IMR-90 (cell line): ENCODE measurements at regions of chr5 and their contacts with region 1.

Region 1: DNA sequence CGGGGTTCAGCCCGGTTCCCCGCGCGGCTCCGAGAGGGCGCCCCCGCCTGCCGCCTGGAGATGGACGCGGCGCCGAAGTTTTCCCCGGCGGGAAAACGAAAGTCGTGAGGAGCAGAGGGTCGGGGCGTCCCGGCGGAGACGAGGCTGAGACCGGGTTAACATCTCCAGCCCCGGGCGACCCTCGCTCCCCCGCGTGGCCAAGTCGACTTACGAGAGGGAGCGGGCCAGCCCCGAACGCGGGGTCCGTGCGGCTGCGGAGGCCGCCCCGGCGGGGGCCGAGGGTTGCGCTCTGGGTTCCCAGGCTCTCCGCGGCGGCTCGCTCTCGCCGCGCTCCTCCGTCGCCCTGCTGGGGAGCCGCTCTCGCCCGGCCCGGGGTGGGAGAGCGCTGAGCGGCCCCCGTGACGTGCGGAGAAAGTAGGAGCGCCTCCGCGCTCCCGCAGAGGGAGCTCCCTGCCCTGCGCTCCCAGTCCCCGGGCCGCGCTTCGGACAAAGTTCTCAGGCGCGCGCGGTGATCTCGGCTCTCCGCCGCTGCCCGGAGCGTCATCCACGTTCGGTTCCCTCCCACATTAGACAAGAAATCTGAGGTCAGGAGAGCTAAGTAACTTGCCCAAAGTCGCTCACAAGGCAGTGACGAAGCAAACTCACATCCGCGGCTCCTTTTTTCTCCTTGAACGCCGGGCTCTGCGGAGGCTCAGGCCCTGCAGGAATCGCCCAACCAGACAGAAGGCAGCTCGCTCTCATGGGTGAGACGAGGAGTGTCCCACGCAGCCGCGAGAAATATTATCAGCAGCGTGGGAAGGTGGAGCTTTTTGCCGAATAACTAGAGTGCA is 1.2 kb upstream of the GCNT4 start:
- DNase-seq: peak; percentile 73
- ATAC-seq: peak; percentile 52
- H3K4me3 ChIP-seq: peak overlapping the region; percentile 82
- H3K27ac ChIP-seq: peak overlapping the region; percentile 68
- H3K4me1 ChIP-seq: peaks cover 19% of the 10 kb centered on the region
- H3K27me3 ChIP-seq: no peaks in the 10 kb centered on the region
- CTCF ChIP-seq: peak; percentile 19; the same call in 1 of the 2 replicates
- POLR2A ChIP-seq: peak; percentile 45; the same call in 1 of the 2 replicates
- RAD21 ChIP-seq: no peak

Region 2: DNA sequence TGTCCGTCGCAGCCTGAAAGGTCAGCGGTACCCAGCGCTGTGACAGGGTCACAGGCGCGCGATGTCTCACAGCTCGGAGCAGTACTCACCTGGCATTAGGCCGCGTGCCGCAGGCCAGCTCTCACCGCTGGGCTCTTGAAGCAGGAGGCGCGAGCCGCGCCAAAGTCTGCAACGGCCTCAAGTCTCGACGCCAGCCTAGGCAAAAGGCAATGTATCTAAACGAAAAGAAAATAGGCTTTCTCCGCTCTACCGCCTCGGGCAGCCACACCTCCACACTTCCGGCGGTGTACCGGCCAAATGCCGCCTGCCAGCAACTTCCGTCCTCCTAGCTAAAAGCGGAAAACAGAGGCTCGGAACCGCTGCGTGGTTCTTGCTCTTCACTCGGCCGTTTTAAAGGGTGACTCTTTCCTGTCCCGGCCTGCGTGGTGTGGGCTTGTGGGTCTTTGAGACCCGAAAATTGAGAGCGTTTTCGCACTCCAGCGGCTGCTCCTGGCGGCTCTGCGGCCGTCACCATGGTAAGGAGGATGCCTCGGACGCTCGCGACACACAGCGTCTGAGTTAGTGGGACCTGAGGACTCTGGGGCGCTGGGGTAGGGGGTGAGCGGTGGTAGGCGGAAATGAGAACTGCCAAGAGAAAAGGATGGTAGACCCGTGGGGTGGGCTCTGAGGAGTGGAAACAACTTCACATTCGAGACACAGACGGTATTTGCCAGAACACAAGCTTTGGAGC is 286.5 kb before region 1 on chr5 and contains the starts of genes GFM2 and NSA2:
- CTCF ChIA-PET with region 1: no interaction called
- POLR2A ChIA-PET with region 1: no interaction called
- dilution Hi-C with region 1: no loop called
- in situ Hi-C with region 1: no loop called
- intact Hi-C with region 1: loop called (anchors 2 kb)
- DNase-seq: peak; percentile 94
- ATAC-seq: peak; percentile 94
- H3K4me3 ChIP-seq: peak within 1 kb of the TSS; percentile 82
- H3K27ac ChIP-seq: peak within 1 kb of the TSS; percentile 88
- H3K4me1 ChIP-seq: peaks cover 7% of the 10 kb centered on the region
- H3K27me3 ChIP-seq: no peaks in the 10 kb centered on the region
- CTCF ChIP-seq: no peak
- POLR2A ChIP-seq: peak; percentile 61
- RAD21 ChIP-seq: no peak
- total RNA-seq, gene GFM2: 45.7 and 61.4 TPM in 2 replicates
- total RNA-seq, gene NSA2: 5.4 and 25.6 TPM in 2 replicates

Region 3: DNA sequence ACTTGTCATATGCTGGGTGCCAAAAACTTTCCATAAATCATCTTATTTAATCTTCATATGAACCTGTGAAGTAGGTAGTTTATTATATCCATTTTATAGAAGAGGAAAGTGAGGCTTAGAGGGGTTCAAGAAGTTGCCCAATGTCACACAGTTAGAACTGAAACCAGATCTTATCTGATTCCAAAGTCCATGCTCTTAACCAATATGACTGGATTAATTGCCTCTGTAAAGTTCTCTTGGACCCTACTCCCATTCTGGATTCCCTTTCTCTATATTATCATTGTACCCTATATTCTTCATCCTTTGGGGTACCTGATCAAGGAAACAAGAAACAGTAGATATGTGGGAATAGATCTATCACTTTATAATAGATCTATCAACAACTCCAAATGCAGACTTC is 63.3 kb after region 1 on chr5:
- CTCF ChIA-PET with region 1: no interaction called
- POLR2A ChIA-PET with region 1: no interaction called
- dilution Hi-C with region 1: no loop called
- in situ Hi-C with region 1: no loop called
- intact Hi-C with region 1: no loop called
- DNase-seq: no peak
- ATAC-seq: no peak
- H3K4me3 ChIP-seq: no peak overlapping the region
- H3K27ac ChIP-seq: no peak overlapping the region
- H3K4me1 ChIP-seq: no peaks in the 10 kb centered on the region
- H3K27me3 ChIP-seq: no peaks in the 10 kb centered on the region
- CTCF ChIP-seq: no peak
- POLR2A ChIP-seq: no peak
- RAD21 ChIP-seq: no peak

Region 4: GRCh38 chr5:75236322-75237316 is 183.1 kb after region 1 on chr5 and contains the start of gene ANKRD31:
- CTCF ChIA-PET with region 1: interaction called, 4 read pairs
- POLR2A ChIA-PET with region 1: no interaction called
- dilution Hi-C with region 1: no loop called
- in situ Hi-C with region 1: no loop called
- intact Hi-C with region 1: loop called (anchors 2 kb)
- DNase-seq: peak; percentile 66
- ATAC-seq: peak; percentile 100
- H3K4me3 ChIP-seq: peak within 1 kb of the TSS; percentile 87
- H3K27ac ChIP-seq: peak within 1 kb of the TSS; percentile 52
- H3K4me1 ChIP-seq: peaks cover 3% of the 10 kb centered on the region
- H3K27me3 ChIP-seq: no peaks in the 10 kb centered on the region
- CTCF ChIP-seq: peak; percentile 83
- POLR2A ChIP-seq: peak; percentile 46; the same call in 1 of the 2 replicates
- RAD21 ChIP-seq: peak; percentile 76
- total RNA-seq, gene ANKRD31: under 0.01 TPM in 2 replicates

Region 5: DNA sequence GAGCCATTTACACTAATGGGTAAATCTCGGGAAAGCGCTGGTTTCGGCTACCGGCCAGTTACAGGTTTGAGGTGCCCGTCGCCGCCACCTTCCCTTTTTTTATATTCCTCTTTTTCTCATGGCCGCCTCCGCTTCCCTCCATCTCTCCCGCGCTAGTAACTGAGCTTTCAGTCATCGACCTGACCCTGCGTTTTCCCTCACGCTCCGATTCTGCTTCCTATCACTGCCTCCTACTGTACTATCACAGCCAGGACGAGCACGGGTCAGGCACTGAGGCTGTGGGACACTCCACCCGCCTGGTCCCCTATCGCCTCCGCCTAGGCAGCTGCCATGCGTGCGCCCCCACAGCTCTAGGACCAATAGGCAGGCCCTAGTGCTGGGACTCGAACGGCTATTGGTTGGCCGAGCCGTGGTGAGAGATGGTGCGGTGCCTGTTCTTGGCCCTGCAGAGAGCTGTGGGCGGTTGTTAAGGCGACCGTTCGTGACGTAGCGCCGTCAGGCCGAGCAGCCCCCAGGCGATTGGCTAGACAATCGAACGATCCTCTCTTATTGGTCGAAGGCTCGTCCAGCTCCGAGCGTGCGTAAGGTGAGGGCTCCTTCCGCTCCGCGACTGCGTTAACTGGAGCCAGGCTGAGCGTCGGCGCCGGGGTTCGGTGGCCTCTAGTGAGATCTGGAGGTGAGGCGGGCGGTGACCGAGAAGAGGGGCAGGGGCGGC is 283.3 kb after region 1 on chr5 and contains the start of gene HMGCR:
- CTCF ChIA-PET with region 1: interaction called, 4 read pairs
- POLR2A ChIA-PET with region 1: no interaction called
- dilution Hi-C with region 1: no loop called
- in situ Hi-C with region 1: no loop called
- intact Hi-C with region 1: loop called (anchors 2 kb)
- DNase-seq: peak; percentile 100
- ATAC-seq: peak; percentile 97
- H3K4me3 ChIP-seq: peak within 1 kb of the TSS; percentile 79
- H3K27ac ChIP-seq: peak within 1 kb of the TSS; percentile 29
- H3K4me1 ChIP-seq: no peaks in the 10 kb centered on the region; the same call in 1 of the 2 replicates
- H3K27me3 ChIP-seq: no peaks in the 10 kb centered on the region
- CTCF ChIP-seq: peak; percentile 38
- POLR2A ChIP-seq: peak; percentile 92
- RAD21 ChIP-seq: peak; percentile 39
- total RNA-seq, gene HMGCR: 48.6 and 89.7 TPM in 2 replicates

Region 6: DNA sequence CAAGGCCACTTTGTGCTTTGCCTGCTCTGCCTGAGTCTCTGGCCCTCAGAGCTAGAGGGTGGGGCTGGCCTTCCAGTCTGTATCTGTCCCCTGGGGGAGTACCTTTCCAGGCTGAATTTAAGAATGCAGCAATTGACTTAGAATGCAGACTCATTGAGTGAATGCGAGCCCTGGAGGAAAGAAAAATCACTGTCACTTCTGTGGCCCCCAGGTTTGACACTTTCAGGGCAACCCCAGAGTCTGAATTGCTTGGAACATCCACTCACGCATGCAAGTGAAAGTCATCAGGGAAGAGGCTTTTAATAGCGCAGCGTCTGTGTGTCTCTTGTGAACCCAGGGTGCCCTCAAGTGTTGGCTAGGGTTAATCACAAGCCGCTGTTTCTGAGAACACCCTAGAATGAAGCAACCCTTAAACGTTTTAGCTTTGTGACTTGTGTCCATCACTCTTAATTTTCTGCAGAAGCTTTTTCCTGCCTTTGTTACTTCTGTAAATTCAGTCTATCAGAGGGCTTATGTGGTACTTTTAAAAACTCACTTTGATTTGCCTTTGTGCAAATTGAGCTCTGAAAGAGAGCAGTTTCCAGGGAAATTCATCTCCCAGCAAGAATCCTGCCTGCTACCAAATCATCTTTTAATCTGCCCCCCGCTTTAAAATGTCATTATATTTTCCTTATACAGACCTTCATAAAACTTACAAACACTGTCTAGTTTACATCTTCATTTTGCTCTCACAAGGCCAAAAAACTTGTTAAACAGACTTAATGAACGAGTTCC is 1202.8 kb after region 1 on chr5:
- CTCF ChIA-PET with region 1: no interaction called
- POLR2A ChIA-PET with region 1: no interaction called
- dilution Hi-C with region 1: no loop called
- in situ Hi-C with region 1: no loop called
- intact Hi-C with region 1: loop called (anchors 5 kb)
- DNase-seq: peak; percentile 66
- ATAC-seq: peak; percentile 100
- H3K4me3 ChIP-seq: no peak overlapping the region
- H3K27ac ChIP-seq: no peak overlapping the region
- H3K4me1 ChIP-seq: no peaks in the 10 kb centered on the region
- H3K27me3 ChIP-seq: peaks cover 2% of the 10 kb centered on the region; the same call in 1 of the 2 replicates
- CTCF ChIP-seq: peak; percentile 65
- POLR2A ChIP-seq: no peak
- RAD21 ChIP-seq: peak; percentile 74